Aorta (tissue), 5 donors: ENCODE measurements at regions of chr21 and their contacts with region 1.

Region 1: DNA sequence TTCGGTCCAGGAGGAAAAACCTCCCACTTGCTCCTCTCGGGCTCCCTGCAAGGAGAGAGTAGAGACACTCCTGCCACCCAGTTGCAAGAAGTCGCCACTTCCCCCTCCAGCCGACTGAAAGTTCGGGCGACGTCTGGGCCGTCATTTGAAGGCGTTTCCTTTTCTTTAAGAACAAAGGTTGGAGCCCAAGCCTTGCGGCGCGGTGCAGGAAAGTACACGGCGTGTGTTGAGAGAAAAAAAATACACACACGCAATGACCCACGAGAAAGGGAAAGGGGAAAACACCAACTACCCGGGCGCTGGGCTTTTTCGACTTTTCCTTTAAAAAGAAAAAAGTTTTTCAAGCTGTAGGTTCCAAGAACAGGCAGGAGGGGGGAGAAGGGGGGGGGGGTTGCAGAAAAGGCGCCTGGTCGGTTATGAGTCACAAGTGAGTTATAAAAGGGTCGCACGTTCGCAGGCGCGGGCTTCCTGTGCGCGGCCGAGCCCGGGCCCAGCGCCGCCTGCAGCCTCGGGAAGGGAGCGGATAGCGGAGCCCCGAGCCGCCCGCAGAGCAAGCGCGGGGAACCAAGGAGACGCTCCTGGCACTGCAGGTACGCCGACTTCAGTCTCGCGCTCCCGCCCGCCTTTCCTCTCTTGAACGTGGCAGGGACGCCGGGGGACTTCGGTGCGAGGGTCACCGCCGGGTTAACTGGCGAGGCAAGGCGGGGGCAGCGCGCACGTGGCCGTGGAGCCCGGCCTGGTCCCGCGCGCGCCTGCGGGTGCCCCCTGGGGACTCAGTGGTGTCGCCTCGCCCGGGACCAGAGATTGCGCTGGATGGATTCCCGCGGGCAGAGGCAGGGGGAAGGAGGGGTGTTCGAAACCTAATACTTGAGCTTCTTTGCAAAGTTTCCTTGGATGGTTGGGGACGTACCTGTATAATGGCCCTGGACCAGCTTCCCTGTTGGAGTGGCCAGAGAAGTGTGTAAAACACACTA is 45.3 kb downstream of the MRPL39 start:
- DNase-seq: peak; percentile 81 to 89
- ATAC-seq: peak; percentile 88
- H3K4me3 ChIP-seq: peak overlapping the region; percentile 64 to 70
- H3K27ac ChIP-seq: peak overlapping the region; percentile 78 to 93
- H3K4me1 ChIP-seq: peaks cover 3 to 7% of the 10 kb centered on the region in 2 donors
- H3K27me3 ChIP-seq: no peaks in the 10 kb centered on the region

Region 2: DNA sequence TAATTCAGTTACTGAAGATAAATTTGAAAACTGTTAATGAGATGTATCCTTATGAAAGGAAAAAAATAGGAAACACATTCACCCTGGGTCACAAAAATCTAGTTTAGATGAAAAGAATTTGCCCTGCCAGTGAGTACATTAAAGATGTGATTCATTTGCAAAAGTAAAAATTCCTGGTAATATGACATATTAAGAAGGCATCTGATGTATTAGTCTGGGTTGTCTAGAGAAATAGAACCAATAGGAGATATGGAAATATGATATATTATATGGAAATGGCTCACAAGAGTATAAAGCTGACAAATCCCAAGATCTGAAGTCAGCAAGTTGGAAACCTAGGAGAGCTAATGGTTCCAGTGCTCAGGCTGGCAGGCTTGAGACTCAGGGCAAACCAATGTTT is 108.4 kb before region 1 on chr21:
- intact Hi-C with region 1: loop called in 1 of 2 experiments (anchors 5 kb)
- DNase-seq: no peak
- ATAC-seq: no peak
- H3K4me3 ChIP-seq: no peak overlapping the region
- H3K27ac ChIP-seq: no peak overlapping the region
- H3K4me1 ChIP-seq: no peaks in the 10 kb centered on the region
- H3K27me3 ChIP-seq: no peaks in the 10 kb centered on the region